ENCODE measurements at regions of chr6 and their contacts with region 1.

Region 1: GRCh38 chr6:157274471-157275226 is 48.7 kb downstream of the TMEM242 start:
- DNase-seq: peak; percentile 67 to 94 (median 78)
- ATAC-seq: peak; percentile 83
- H3K4me3 ChIP-seq: peak overlapping the region; percentile 74
- H3K4me3 Mint-ChIP-seq: peak overlapping the region; percentile 97
- H3K27ac ChIP-seq: peak overlapping the region; percentile 70 to 79
- H3K27ac Mint-ChIP-seq: peak overlapping the region; percentile 98
- H3K4me1 ChIP-seq: peaks cover 17% of the 10 kb centered on the region
- H3K4me1 Mint-ChIP-seq: peaks cover 13% of the 10 kb centered on the region
- H3K27me3 ChIP-seq: no peaks in the 10 kb centered on the region
- H3K27me3 Mint-ChIP-seq: no peaks in the 10 kb centered on the region
- CTCF ChIP-seq: peak; percentile 56

Region 2: GRCh38 chr6:155319902-155320301 is 1954.7 kb before region 1 on chr6:
- CTCF ChIA-PET with region 1: no interaction called
- POLR2A ChIA-PET with region 1: no interaction called
- intact Hi-C with region 1: loop called (anchors 5 kb)
- DNase-seq: no peak
- ATAC-seq: no peak
- H3K4me3 ChIP-seq: no peak overlapping the region
- H3K4me3 Mint-ChIP-seq: no peak overlapping the region
- H3K27ac ChIP-seq: no peak overlapping the region
- H3K27ac Mint-ChIP-seq: no peak overlapping the region
- H3K4me1 ChIP-seq: no peaks in the 10 kb centered on the region
- H3K4me1 Mint-ChIP-seq: peaks cover 7% of the 10 kb centered on the region
- H3K27me3 ChIP-seq: no peaks in the 10 kb centered on the region
- H3K27me3 Mint-ChIP-seq: no peaks in the 10 kb centered on the region
- CTCF ChIP-seq: no peak

Region 3: DNA sequence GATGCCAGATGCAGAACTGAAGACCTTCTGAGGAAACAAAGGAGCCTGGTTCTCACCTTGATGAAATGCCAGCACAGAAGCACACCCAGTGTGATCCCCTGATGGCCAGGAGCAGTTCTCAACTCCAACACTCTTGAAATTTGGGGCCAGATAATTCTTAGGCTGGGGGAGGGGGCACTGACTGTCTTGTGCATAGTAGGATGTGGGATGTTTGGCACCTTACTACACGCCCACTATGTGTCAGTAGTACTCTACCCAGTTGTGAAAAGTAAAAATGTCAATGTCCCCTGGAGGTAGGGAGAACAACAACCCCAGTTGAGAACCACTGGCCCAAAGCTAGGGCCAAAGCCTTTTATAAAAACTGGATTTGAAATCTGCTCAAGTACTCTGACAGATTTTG is 895.8 kb before region 1 on chr6:
- CTCF ChIA-PET with region 1: no interaction called
- POLR2A ChIA-PET with region 1: no interaction called
- intact Hi-C with region 1: loop called in 1 of 2 experiments (anchors 10 kb)
- DNase-seq: peak in 4 of 14 experiments; percentile 21 to 61 (median 48)
- ATAC-seq: peak; percentile 79
- H3K4me3 ChIP-seq: no peak overlapping the region
- H3K4me3 Mint-ChIP-seq: no peak overlapping the region
- H3K27ac ChIP-seq: no peak overlapping the region
- H3K27ac Mint-ChIP-seq: no peak overlapping the region
- H3K4me1 ChIP-seq: peaks cover 2% of the 10 kb centered on the region
- H3K4me1 Mint-ChIP-seq: peaks cover 14% of the 10 kb centered on the region
- H3K27me3 ChIP-seq: no peaks in the 10 kb centered on the region
- H3K27me3 Mint-ChIP-seq: no peaks in the 10 kb centered on the region
- CTCF ChIP-seq: peak; percentile 50

Region 4: GRCh38 chr6:157221007-157221816 is 53.4 kb before region 1 on chr6:
- CTCF ChIA-PET with region 1: interaction called, 8 read pairs
- POLR2A ChIA-PET with region 1: interaction called, 7 read pairs
- intact Hi-C with region 1: loop called in 1 of 2 experiments (anchors 2 kb)
- DNase-seq: peak; percentile 67 to 90 (median 80)
- ATAC-seq: peak; percentile 94
- H3K4me3 ChIP-seq: peak overlapping the region; percentile 60
- H3K4me3 Mint-ChIP-seq: peak overlapping the region; percentile 88
- H3K27ac ChIP-seq: no peak overlapping the region
- H3K27ac Mint-ChIP-seq: peak overlapping the region; percentile 28
- H3K4me1 ChIP-seq: peaks cover 44% of the 10 kb centered on the region
- H3K4me1 Mint-ChIP-seq: peaks cover 38% of the 10 kb centered on the region
- H3K27me3 ChIP-seq: no peaks in the 10 kb centered on the region
- H3K27me3 Mint-ChIP-seq: no peaks in the 10 kb centered on the region
- CTCF ChIP-seq: no peak

Region 5: DNA sequence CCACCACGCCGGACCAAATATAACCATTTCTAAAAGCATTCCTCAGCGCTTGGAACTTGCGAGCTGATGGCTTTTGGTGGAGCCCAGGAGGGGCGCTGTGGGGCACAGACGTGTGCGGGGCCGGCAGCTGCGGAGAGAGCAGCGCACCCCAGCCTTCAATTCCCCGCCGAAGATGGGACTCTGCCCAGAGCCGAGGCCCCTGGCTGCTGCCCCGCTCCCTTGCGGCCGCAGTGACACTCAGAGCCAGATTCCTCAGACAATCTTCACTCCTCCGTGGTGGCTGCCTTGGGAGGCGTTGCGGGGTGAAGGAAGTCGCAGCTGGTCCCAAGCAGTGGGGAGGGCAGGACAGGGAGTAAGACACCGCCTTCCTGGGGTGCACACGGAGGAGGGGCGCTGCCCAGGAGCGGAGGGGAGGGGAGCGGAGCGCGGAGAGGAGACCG is 39.0 kb before region 1 on chr6:
- CTCF ChIA-PET with region 1: interaction called, 14 read pairs
- POLR2A ChIA-PET with region 1: interaction called, 12 read pairs
- intact Hi-C with region 1: loop called (anchors 2 kb)
- DNase-seq: peak; percentile 16 to 83 (median 48)
- ATAC-seq: peak; percentile 90
- H3K4me3 ChIP-seq: peak overlapping the region; percentile 65
- H3K4me3 Mint-ChIP-seq: peak overlapping the region; percentile 96
- H3K27ac ChIP-seq: no peak overlapping the region
- H3K27ac Mint-ChIP-seq: peak overlapping the region; percentile 25
- H3K4me1 ChIP-seq: peaks cover 33% of the 10 kb centered on the region
- H3K4me1 Mint-ChIP-seq: peaks cover 26% of the 10 kb centered on the region
- H3K27me3 ChIP-seq: peaks cover 6 to 25% of the 10 kb centered on the region in 2 experiments
- H3K27me3 Mint-ChIP-seq: peaks cover 37% of the 10 kb centered on the region
- CTCF ChIP-seq: peak; percentile 76

Measured in CD4-positive, alpha-beta T cell (primary cell).